RWPE1 (cell line): ENCODE measurements at regions of chr7 and their contacts with region 1.

Region 1: GRCh38 chr7:1065263-1066260 is 21.2 kb downstream of the GPR146 start:
- DNase-seq: peak; percentile 87
- H3K27ac ChIP-seq: peak overlapping the region; percentile 73
- CTCF ChIP-seq: peak; percentile 94

Region 2: GRCh38 chr7:1053002-1053478 is 12.5 kb before region 1 on chr7:
- CTCF ChIA-PET with region 1: interaction called, 10 read pairs
- POLR2A ChIA-PET with region 1: no interaction called
- DNase-seq: no peak
- H3K27ac ChIP-seq: peak overlapping the region; percentile 49
- CTCF ChIP-seq: no peak

Region 3: DNA sequence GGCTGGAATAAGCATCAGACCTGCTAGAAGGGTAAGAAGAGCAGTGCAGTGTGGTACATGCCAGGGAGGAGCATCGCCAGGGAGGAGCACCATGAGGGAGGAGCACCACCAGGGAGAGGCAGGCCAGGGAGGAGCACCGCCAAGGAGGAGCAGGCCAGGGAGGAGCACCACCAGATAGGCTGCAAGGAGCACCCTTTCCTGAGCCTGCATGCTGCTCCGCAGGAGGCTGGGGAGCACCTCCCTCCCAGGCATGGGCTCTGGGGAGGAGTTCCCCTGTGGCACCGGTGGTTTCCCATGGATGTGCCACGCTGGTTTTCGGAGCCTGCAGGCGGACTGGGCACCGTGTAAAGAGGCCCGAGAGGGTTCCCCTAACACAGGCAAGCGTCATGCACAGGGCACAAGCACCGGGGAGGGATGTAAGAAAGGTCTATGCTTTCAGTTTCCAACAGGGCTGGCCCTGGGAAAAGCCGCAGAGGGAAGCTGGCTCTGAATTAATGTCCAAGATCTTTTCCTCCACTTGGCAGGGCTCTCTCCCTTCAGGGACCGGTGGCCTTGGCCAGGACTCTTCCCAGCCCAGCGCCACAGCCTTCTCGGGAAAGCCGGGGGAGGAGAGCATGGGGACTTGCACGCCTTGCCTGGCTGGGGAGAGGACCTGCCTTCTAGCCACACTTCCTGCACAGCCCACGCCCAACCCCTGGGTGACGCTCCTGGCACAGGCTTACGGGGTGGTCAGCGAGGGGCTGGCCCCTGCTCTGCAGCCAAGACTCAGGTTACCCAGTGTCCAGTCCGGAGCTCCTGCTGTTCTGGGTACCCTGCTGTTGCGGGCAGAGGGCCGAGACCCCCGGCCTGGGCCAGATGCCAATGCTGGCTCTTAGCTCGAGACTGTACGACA is 10.9 kb after region 1 on chr7:
- CTCF ChIA-PET with region 1: interaction called, 16 read pairs
- POLR2A ChIA-PET with region 1: no interaction called
- DNase-seq: no peak
- H3K27ac ChIP-seq: peak overlapping the region; percentile 83
- CTCF ChIP-seq: no peak